Mammary epithelial cell (primary cell): ENCODE measurements at regions of chr2 and their contacts with region 1.

Region 1: DNA sequence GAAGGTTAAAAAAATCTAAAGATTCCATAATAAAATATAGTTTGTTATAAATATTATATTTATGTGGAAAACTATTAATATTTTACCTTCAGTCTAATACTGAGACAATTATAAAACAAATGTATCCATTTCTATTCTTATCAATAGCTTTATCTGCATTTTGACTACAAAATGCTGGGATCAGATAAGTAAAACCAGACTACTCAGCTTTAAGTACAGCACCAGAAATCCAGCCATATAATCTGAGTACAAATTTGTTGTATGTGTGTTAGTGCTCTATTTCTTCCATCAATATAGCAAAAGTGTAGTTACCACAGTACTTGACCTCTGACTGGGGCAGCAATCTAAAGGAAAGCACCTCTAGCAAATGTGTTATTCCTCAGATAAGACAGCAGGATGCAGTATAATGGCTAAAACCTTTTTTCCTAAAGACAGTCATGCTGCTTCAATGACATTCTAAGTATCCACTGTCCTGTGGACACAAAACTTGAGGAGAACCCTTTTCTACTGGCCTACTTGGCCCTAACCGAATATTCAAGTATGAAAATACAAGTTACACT is 68.1 kb downstream of the OLA1 start:
- DNase-seq: peak; percentile 11
- H3K4me3 ChIP-seq: no peak overlapping the region
- H3K27ac ChIP-seq: no peak overlapping the region
- H3K4me1 ChIP-seq: peaks cover 13% of the 10 kb centered on the region
- H3K27me3 ChIP-seq: no peaks in the 10 kb centered on the region
- CTCF ChIP-seq: peak; percentile 11 to 24

Region 2: DNA sequence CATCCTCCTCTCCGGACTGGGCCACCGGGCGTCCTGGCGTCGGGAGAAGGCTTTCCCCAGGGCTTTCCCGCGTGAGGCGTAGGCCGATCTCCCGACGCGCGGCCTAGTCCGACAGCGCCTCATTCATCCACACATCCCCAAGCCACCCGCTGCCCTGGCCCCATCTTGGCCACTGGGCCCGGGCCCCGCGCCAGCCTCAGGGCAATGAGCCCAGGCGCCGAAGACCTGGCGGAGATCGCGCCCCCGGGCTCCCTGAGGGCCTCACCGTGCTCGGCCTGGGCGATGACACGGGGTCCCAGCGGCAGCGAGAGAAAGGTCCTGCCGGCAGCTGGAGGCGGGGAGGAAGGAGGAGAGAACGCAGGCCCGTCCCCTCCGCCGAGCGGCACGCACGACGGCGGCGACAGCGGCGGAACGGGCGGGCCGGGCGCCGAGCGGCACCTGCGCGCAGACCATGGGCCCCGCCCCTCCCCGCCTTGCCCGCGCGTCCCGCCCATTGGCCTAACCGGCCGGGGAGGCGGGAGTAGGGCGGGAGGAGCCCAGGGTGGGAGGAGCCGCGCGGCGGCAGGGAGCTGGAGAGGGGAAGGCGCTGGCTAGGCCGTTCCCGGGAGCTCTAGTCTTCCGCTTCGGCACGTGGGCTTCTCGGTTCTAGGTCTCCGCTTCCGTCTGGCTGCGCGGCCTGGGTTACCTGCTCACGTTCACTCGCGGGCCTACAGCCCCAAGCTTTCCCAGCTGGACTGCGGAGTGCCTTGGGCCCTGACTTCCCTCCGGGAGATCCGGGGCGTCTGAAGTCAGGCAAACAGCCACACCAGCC is 68.1 kb after region 1 on chr2 and contains the start of gene OLA1:
- CTCF ChIA-PET with region 1: no interaction called
- dilution Hi-C with region 1: no loop called
- in situ Hi-C with region 1: no loop called
- intact Hi-C with region 1: loop called (anchors 5 kb)
- DNase-seq: peak; percentile 96
- H3K4me3 ChIP-seq: peak within 1 kb of the TSS; percentile 67 to 81 (median 73)
- H3K27ac ChIP-seq: peak within 1 kb of the TSS; percentile 79
- H3K4me1 ChIP-seq: peaks cover 21% of the 10 kb centered on the region
- H3K27me3 ChIP-seq: no peaks in the 10 kb centered on the region
- CTCF ChIP-seq: peak in 1 of 2 donors; percentile 9
- total RNA-seq, gene OLA1: 104 to 150 TPM